ENCODE measurements at regions of chr3 and their contacts with region 1.

Region 1: GRCh38 chr3:52455283-52456168 is at the start of gene NISCH:
- DNase-seq: peak; percentile 82 to 91 (median 91)
- H3K4me3 ChIP-seq: peak within 1 kb of the TSS; percentile 61 to 90 (median 78)
- H3K27ac ChIP-seq: peak within 1 kb of the TSS; percentile 40 to 81
- H3K4me1 ChIP-seq: peaks cover 0 to 31% (median 23%) of the 10 kb centered on the region in 4 experiments
- H3K27me3 ChIP-seq: no peaks in the 10 kb centered on the region

Region 2: DNA sequence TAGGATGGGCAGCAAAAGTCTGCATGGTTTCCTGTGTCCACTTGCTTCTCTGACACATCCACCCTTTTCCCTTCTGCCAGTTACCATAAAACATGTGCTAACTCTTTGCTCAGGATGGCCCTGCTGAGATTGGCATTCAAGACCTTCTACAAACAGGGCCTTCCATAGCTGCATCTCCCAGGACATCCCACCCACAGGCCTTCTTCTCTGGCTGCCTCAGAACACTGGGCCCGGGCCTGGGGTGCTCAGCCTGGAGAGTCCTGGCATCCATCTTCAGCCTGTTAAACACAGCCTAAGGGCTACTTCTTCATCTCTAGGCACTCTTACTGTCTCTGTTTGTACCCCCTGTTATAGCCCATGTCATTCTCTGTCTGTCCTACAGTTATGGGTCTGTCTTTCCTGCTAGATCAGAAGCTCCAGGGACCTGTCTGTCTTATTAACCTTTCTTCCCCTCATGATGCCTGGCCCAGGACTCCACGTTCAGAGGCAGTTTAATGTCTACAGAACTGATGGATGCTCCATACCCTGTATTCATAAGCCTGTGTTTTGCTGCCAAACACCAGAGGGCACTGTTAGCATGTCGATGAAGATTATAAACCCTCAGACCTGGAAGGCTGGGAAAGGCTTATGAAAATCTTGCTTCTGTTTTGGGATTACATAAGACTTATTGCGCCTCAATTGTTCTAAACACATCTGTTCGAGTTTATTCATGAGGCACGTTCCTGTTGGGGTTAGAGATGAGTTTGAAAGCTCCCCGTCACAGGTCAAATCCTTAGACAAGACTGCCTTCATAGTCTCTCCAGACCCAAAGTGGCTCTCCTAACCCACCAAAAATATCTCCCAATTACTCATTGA is 27.1 kb before region 1 on chr3:
- CTCF ChIA-PET with region 1: interaction called, 477 read pairs
- POLR2A ChIA-PET with region 1: no interaction called
- DNase-seq: peak; percentile 52 to 69 (median 63)
- H3K4me3 ChIP-seq: no peak overlapping the region
- H3K27ac ChIP-seq: no peak overlapping the region
- H3K4me1 ChIP-seq: no peaks in the 10 kb centered on the region
- H3K27me3 ChIP-seq: no peaks in the 10 kb centered on the region